Activated B cell treated with CpG ODN at 0.5 μM for 24 hours (primary cell): ENCODE measurements at regions of chr3 and their contacts with region 1.

Region 1: DNA sequence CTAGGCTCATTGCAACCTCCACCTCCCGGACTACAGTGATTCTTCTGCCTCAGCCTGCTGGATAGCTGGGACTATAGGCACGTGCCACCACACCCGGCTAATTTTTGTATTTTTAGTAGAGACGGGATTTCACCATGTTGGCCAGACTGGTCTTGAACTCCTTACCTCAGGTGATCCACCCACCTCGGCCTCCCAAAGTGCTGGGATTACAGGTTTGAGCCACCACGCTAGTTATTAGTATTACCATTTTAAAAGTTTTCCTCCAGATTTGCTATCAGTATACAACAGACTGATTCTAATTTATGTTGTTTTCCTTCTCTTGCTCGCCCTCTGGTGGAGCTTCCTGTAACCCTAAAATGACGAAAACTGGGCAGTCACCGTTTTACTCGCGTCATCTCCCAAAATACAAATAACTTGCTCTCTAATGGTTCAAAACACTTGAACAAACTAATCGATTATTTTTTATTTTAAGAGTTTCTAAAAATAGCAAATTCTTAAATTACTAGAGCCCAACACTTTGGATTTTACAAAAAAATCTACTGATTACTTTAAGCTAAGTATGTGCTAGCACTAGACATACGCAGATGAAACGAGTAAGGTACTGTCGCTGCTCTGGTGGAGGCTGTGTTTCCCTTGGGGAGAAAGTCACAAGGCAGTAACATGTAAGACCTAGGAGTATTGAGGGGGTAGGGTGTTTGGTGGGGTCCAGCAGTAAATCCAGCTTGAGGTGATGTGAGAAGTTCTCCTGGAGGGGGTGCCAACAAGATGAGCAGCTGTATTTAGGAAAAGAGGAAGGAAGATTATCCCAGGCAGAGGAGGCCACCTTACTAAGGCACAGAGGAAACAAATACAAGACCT is 203.3 kb downstream of the MBNL1 start:
- DNase-seq: peak; percentile 31
- ATAC-seq: peak; percentile 82
- H3K4me3 Mint-ChIP-seq: peak overlapping the region; percentile 78
- H3K27ac Mint-ChIP-seq: peak overlapping the region; percentile 65
- H3K4me1 Mint-ChIP-seq: peaks cover 26% of the 10 kb centered on the region
- H3K27me3 Mint-ChIP-seq: no peaks in the 10 kb centered on the region
- CTCF ChIP-seq: peak; percentile 17

Region 2: DNA sequence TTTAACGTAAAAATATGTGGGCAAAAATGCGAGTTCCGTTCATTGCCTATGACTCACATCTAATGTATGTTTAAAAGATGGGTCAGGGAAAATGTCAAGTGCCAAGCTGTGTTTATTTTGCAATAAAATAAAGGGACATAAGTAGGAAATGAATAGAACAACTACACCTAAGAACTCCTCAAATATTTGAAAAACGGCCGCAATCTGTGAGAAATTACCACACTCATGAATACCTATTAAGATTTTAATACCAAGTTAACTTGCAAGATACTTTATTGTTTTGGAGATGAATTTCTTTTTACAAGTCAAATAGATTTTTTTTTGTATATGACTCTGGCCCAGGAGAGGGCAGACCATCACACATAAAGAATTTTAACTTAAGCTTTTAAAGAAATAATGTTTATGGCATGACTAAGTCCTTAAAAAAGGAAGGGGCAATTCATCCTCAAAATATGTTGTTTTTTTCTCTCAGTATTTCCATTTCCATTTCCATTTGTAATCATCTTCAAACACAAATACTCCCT is 445.9 kb before region 1 on chr3:
- CTCF ChIA-PET with region 1: no interaction called
- POLR2A ChIA-PET with region 1: no interaction called
- intact Hi-C with region 1: loop called (anchors 1 kb)
- DNase-seq: no peak
- ATAC-seq: no peak
- H3K4me3 Mint-ChIP-seq: no peak overlapping the region
- H3K27ac Mint-ChIP-seq: no peak overlapping the region
- H3K4me1 Mint-ChIP-seq: no peaks in the 10 kb centered on the region
- H3K27me3 Mint-ChIP-seq: no peaks in the 10 kb centered on the region
- CTCF ChIP-seq: no peak

Region 3: DNA sequence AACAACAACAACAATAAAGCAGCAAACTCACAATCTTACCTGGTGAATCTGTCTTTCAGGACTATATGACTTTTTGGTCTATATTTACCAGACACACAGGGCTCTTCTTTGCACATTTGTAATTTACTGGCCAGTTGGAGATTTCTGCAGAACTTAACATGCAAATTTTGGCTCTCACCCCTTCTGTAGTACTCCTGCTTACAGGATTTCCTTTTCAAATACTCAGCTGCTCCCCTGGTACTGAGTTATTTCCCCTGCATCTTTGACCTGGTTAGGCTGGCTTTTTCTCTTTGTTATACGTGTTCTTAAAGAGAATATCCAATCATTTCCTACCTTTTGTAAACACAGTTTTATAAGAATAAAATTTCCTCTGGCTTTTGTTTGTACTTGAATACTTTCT is 24.7 kb after region 1 on chr3:
- CTCF ChIA-PET with region 1: interaction called, 6 read pairs
- POLR2A ChIA-PET with region 1: interaction called, 6 read pairs
- intact Hi-C with region 1: loop called (anchors 2 kb)
- DNase-seq: no peak
- ATAC-seq: peak; percentile 53
- H3K4me3 Mint-ChIP-seq: peak overlapping the region; percentile 77
- H3K27ac Mint-ChIP-seq: peak overlapping the region; percentile 80
- H3K4me1 Mint-ChIP-seq: peaks cover 60% of the 10 kb centered on the region
- H3K27me3 Mint-ChIP-seq: no peaks in the 10 kb centered on the region
- CTCF ChIP-seq: no peak

Region 4: DNA sequence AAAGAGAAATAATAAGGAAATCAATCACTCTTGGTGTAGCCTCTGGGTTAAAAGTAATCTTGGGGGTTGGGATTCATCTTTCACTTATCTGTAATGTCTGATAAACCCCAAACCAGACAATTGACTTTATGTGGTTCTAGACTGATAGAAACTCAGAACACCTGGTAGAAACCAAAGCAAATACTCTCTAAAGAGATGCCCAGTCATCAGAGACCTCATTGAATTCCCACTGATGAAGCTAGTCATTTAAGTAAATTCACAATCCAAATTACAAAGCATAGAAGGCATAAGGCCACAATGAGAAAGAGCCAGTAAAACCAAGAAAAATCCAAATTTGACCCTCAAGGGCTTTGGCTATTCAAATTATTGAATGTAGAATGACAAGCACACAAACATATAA is 47.3 kb after region 1 on chr3:
- CTCF ChIA-PET with region 1: interaction called, 106 read pairs
- POLR2A ChIA-PET with region 1: interaction called, 22 read pairs
- intact Hi-C with region 1: loop called (anchors 1 kb)
- DNase-seq: no peak
- ATAC-seq: no peak
- H3K4me3 Mint-ChIP-seq: no peak overlapping the region
- H3K27ac Mint-ChIP-seq: peak overlapping the region; percentile 76
- H3K4me1 Mint-ChIP-seq: peaks cover 79% of the 10 kb centered on the region
- H3K27me3 Mint-ChIP-seq: no peaks in the 10 kb centered on the region
- CTCF ChIP-seq: no peak

Region 5: GRCh38 chr3:152574461-152575079 is 102.5 kb after region 1 on chr3:
- CTCF ChIA-PET with region 1: interaction called, 33 read pairs
- POLR2A ChIA-PET with region 1: no interaction called
- intact Hi-C with region 1: loop called (anchors 1 kb)
- DNase-seq: no peak
- ATAC-seq: peak; percentile 52
- H3K4me3 Mint-ChIP-seq: no peak overlapping the region
- H3K27ac Mint-ChIP-seq: no peak overlapping the region
- H3K4me1 Mint-ChIP-seq: no peaks in the 10 kb centered on the region
- H3K27me3 Mint-ChIP-seq: no peaks in the 10 kb centered on the region
- CTCF ChIP-seq: no peak

Region 6: DNA sequence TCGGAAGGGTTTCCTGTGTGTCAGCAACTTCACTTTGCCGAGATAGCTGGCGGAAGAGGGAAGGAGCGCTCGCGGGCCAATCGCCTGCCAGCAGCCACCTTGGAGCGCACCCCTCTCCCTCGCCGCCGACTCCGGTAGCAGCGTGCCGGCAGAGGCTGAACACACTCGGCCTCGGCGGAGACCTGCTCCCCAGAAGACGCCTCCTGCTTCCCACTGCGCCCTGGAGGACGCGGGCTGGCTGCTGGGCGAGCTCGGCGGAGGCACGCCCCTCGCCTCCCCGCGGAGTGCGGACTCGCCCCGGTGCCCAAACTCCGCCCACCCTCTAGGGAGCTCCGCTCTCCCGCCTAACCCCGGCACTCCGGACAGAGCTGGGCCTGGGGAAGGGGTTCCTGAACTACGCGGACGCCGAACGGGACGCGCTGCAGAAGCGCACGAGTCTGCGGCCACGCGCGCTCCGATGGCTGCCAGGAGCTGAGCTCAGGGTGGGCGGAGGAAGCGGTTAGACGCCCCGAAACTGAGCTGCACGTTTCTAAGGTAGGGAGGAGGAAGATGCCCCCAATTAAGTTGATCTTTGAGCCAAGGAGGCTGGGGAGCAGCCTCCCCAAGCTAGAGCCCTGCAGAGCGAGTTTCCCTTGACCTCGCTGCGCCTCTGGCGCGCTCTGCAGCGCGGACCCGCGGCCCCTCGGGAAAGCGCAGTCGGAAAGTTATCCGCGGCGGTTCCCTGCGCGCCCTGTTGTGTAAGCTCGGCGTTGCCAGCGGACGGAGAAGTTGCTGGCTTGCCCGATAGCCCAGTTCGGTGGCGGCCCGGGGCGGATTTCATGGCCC is 362.9 kb after region 1 on chr3 and contains the start of gene P2RY1:
- CTCF ChIA-PET with region 1: no interaction called
- POLR2A ChIA-PET with region 1: no interaction called
- intact Hi-C with region 1: loop called (anchors 10 kb)
- DNase-seq: peak; percentile 32
- ATAC-seq: peak; percentile 76
- H3K4me3 Mint-ChIP-seq: peak within 1 kb of the TSS; percentile 88
- H3K27ac Mint-ChIP-seq: no peak within 1 kb of the TSS
- H3K4me1 Mint-ChIP-seq: peaks cover 20% of the 10 kb centered on the region
- H3K27me3 Mint-ChIP-seq: peaks cover 26% of the 10 kb centered on the region
- CTCF ChIP-seq: no peak
- total RNA-seq, gene P2RY1: 0.20 TPM in 2 replicates